ENCODE measurements at regions of chr18 and their contacts with region 1.

Region 1: DNA sequence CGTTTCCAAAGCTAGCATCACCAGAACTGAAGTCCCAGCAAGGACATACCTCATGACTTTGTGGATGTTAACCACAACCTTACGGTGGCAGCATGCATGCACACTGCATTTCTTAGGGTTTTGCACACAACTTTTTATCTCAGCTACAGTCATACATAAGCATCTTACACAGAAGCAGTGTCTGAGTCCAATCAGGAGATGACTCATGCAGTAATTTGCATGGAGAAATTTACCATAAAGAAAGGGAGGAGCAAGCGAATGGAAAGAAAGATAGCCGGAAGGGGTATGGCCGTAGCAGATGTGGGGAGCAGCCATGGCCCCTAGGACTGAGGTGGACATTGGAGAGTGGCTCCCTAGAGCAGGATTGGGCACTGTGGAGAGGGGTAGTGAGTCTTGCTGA is 522.5 kb downstream of the GALR1 start:
- DNase-seq: no peak
- ATAC-seq: no peak
- H3K4me3 ChIP-seq: no peak overlapping the region
- H3K27ac ChIP-seq: no peak overlapping the region
- H3K4me1 ChIP-seq: no peaks in the 10 kb centered on the region
- H3K27me3 ChIP-seq: no peaks in the 10 kb centered on the region
- CTCF ChIP-seq: no peak
- EP300 ChIP-seq: no peak
- POLR2A ChIP-seq: no peak
- RAD21 ChIP-seq: no peak

Region 2: GRCh38 chr18:77679869-77680268 is 92.3 kb before region 1 on chr18:
- CTCF ChIA-PET with region 1: no interaction called
- POLR2A ChIA-PET with region 1: no interaction called
- RAD21 ChIA-PET with region 1: no interaction called
- SMC1A ChIA-PET with region 1: no interaction called
- in situ Hi-C with region 1: no loop called
- intact Hi-C with region 1: no loop called
- DNase-seq: no peak
- ATAC-seq: no peak
- H3K4me3 ChIP-seq: no peak overlapping the region
- H3K27ac ChIP-seq: no peak overlapping the region
- H3K4me1 ChIP-seq: no peaks in the 10 kb centered on the region
- H3K27me3 ChIP-seq: no peaks in the 10 kb centered on the region
- CTCF ChIP-seq: no peak
- EP300 ChIP-seq: no peak
- POLR2A ChIP-seq: no peak
- RAD21 ChIP-seq: no peak

Region 3: GRCh38 chr18:77749089-77749488 is 23.1 kb before region 1 on chr18:
- CTCF ChIA-PET with region 1: no interaction called
- POLR2A ChIA-PET with region 1: no interaction called
- RAD21 ChIA-PET with region 1: no interaction called
- SMC1A ChIA-PET with region 1: no interaction called
- in situ Hi-C with region 1: no loop called
- intact Hi-C with region 1: loop called (anchors 1 kb)
- DNase-seq: no peak
- ATAC-seq: no peak
- H3K4me3 ChIP-seq: no peak overlapping the region
- H3K27ac ChIP-seq: no peak overlapping the region
- H3K4me1 ChIP-seq: no peaks in the 10 kb centered on the region
- H3K27me3 ChIP-seq: no peaks in the 10 kb centered on the region
- CTCF ChIP-seq: peak; percentile 14 to 49 (median 33); a peak in 4 of 6 replicates
- EP300 ChIP-seq: no peak
- POLR2A ChIP-seq: no peak
- RAD21 ChIP-seq: peak; percentile 22; the same call in 1 of the 2 replicates

Measured in GM12878 (cell line).